ENCODE measurements at regions of chr9 and their contacts with region 1.

Region 1: DNA sequence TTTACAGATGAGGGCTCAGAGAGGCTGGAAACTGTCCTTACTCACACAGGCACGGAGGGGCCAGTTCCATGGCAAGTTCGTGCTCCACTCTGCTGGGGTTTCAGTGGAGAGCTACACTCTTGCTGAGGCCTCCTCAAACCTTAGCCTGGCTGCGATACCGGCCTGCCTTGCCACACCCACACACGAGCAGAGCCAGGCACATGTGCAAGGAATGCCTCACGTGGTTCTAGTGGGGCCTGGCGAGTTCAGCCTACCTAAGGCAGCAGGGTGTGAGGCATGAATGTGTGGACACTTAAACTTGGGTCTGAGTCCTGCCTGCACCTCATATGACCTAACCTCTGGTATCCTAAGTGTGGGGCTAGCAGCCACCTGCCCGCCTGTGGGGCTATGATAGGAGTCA is 21.5 kb upstream of the PRDM12 start:
- DNase-seq: no peak
- H3K27ac ChIP-seq: no peak overlapping the region
- CTCF ChIP-seq: no peak

Region 2: DNA sequence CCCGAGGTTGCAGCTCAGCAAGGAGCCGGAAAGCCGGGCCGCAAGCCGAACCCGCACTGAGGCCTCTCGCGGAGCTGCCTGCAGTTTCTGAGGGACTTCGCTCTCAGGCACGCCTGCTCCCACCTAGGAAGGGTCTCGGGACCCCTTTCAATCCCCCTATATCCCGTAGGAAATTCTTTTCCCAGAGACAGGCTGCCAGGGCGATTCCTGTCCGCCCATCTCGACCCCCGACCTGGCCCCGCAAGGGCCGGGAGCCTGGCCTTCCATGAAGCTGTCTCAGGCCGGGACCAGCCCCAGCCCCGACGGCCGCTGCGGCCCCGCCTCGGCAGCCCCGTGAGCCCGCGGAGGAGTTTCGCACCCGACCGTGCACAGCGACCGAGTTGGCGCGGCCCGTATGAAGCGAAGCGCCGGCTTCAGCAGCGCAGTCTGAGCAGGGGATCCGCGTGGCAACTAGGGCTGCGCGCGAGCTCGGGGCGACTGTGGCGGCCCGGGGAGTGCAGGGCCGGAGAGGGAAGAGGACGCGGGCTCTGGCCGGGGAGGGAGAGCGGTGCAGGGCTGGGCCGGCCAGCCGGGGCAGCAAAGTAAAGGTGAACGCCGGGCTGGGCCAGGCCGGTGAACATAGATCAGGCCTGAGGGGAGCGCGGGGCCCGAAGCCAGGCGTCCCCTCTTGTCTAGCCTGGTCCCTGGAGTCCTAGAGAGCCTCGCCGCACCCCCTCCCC is 20.5 kb after region 1 on chr9:
- CTCF ChIA-PET with region 1: no interaction called
- POLR2A ChIA-PET with region 1: interaction called, 10 read pairs
- DNase-seq: no peak
- H3K27ac ChIP-seq: no peak overlapping the region
- CTCF ChIP-seq: no peak